Calu3 (cell line): ENCODE measurements at regions of chr19 and their contacts with region 1.

Region 1: DNA sequence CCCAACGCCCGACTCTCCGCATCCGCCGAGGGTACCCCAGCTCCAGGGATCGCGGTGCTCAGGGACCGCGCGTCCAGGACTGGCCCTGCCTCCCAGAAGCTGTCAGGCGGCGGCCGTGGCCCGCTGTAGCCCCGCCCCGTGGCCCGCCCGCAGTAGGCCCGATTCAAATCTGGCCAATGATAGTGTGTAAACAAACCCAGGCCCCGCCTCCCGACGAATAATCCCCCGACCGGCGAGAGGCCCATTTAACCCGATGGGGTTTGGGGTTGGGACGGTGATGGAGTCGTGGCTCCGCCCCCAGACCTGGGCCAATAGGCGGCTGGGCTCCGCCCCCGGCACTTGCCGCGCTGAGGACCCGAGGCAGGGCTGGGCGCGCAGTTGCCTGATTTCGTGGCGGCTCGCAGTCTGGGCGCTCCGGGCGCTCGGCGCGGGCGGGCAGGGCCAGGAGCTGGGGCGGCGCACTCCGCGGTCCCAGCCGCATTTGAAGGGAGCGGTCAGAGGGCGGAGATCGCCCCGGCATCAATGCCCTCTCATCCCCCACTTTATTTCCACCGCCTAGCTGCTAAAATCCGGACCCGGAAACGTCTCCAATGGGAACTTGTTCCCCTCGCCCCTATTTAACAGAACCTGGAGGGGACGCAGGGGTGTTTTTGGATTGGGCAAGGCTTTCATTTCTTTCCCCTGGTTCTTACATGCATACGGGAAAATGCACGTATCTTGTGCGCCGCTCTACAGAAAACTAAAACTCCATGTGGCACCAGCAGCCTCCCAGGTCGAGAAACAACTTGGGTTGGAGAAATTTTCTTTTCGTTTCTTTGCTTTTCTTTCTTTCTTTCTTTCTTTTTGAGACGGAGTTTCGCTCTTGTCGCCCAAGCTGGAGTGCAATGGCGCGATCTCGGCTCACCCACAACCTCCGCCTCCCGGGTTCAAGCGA is 8.4 kb upstream of the BICRA start:
- DNase-seq: peak; percentile 100
- H3K4me3 Mint-ChIP-seq: peak overlapping the region; percentile 69
- H3K27ac Mint-ChIP-seq: peak overlapping the region; percentile 76
- H3K4me1 Mint-ChIP-seq: peaks cover 27% of the 10 kb centered on the region
- H3K27me3 Mint-ChIP-seq: peaks cover 18% of the 10 kb centered on the region
- CTCF ChIP-seq: no peak

Region 2: DNA sequence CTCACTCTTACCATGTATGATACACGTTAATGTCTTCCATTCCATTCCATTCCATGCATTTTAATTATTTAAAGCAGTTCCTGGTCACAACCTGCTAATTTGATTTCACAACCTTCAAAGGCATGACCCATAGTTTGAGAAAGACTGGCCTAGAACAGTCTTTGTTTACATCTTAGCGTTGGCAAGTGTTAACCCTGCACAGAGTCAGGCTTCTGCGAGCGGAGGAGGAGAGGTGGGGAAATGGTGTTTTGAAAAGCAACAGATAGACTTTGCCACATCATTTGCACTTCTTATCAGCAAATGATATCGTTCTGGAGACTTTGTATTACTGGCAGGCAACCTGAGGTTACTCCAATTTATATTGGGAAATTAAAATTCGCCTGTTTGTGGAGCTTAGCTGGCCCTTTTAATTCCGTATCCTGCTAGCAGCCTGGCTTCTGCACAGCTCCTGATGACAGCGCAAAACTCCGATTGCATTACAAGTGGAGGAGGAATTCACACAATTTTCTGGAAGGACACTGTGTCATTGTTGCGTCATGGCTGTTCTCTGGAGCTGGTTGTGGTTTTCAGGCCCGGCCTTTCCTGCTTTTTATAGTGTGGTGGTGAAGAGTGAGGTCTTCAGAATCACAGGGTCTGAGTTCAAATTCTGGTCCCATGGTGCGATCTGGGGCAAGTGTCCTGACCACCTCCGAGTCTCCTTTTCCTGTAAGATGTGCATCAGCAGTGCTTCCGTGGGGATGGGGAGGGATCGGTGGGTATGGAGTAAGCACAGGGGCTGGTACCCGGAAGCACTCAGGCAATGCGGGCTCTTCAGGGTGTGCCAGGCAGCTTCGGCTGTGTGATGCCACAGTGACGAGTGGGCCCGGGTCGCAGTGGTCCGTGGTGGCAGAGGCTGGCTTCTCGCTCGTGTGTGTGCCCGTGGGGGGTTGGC is 63.6 kb after region 1 on chr19:
- CTCF ChIA-PET with region 1: no interaction called
- intact Hi-C with region 1: loop called (anchors 5 kb)
- DNase-seq: peak; percentile 52
- H3K4me3 Mint-ChIP-seq: peak overlapping the region; percentile 20
- H3K27ac Mint-ChIP-seq: peak overlapping the region; percentile 80
- H3K4me1 Mint-ChIP-seq: peaks cover 52% of the 10 kb centered on the region
- H3K27me3 Mint-ChIP-seq: no peaks in the 10 kb centered on the region
- CTCF ChIP-seq: no peak

Region 3: GRCh38 chr19:47726467-47726866 is 126.0 kb after region 1 on chr19:
- CTCF ChIA-PET with region 1: no interaction called
- intact Hi-C with region 1: no loop called
- DNase-seq: no peak
- H3K4me3 Mint-ChIP-seq: no peak overlapping the region
- H3K27ac Mint-ChIP-seq: no peak overlapping the region
- H3K4me1 Mint-ChIP-seq: peaks cover 45% of the 10 kb centered on the region
- H3K27me3 Mint-ChIP-seq: no peaks in the 10 kb centered on the region
- CTCF ChIP-seq: no peak